ENCODE measurements at regions of chr2 and their contacts with region 1.

Region 1: DNA sequence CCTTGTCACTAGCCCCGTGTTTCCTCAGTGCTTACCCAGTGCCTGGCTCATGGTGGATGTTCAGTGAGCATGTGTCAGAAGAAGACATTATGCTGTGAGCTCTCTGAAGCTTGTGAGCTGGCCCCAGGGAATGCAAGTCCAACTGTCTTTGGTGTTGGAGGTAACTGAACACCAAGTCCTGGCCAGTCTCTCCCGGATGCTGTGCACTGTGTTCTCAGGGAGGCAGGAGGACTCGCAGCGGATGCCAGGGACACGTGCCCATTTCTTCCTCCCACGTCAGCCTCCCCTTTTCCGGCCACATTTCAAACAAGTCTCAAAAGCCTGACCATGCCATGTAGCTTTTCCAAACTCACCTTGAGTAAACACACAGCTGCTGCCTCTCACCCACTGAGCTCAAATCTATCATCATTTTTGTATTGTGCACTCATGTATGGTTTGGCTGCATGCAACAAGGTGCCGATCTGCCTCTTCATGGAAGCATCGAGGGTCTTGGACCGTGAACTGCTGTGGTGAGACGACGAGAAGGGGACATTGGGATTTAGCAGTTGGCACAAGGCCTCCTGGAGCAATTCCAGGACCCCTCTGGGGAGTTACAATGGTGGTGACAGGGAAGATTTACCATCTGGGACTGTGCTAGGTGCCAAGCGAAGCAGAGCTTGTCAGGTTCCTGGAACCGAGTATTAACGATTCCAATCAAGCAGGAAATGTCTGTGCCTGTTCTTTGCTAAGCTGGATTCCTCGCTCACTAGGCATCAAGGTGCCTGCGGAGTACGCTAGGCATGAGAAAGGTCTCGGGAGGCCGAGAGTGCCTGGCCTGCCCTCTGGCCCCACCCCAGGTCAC is 44.4 kb upstream of the MGAT4A start:
- DNase-seq: no peak
- H3K4me3 ChIP-seq: no peak overlapping the region
- H3K27ac ChIP-seq: no peak overlapping the region
- H3K4me1 ChIP-seq: peaks cover 12% of the 10 kb centered on the region
- H3K27me3 ChIP-seq: no peaks in the 10 kb centered on the region
- CTCF ChIP-seq: no peak

Region 2: GRCh38 chr2:98709535-98709934 is 65.8 kb before region 1 on chr2:
- CTCF ChIA-PET with region 1: no interaction called
- dilution Hi-C with region 1: loop called (anchors 5 kb)
- in situ Hi-C with region 1: no loop called
- intact Hi-C with region 1: no loop called
- DNase-seq: no peak
- H3K4me3 ChIP-seq: no peak overlapping the region
- H3K27ac ChIP-seq: no peak overlapping the region
- H3K4me1 ChIP-seq: no peaks in the 10 kb centered on the region
- H3K27me3 ChIP-seq: no peaks in the 10 kb centered on the region
- CTCF ChIP-seq: no peak